ENCODE measurements at regions of chrX and their contacts with region 1.

Region 1: GRCh38 chrX:69222103-69223090 is 57.1 kb upstream of the PJA1 start:
- DNase-seq: peak; percentile 92
- H3K4me3 ChIP-seq: no peak overlapping the region
- H3K27ac ChIP-seq: no peak overlapping the region
- H3K4me1 ChIP-seq: peaks cover 0 to 17% (median 9%) of the 10 kb centered on the region in 4 donors
- H3K27me3 ChIP-seq: no peaks in the 10 kb centered on the region
- CTCF ChIP-seq: peak; percentile 68 to 74 (median 70)
- EP300 ChIP-seq: no peak
- POLR2A ChIP-seq: no peak

Region 2: GRCh38 chrX:68273887-68274286 is 948.5 kb before region 1 on chrX:
- intact Hi-C with region 1: no loop called
- DNase-seq: no peak
- H3K4me3 ChIP-seq: no peak overlapping the region
- H3K27ac ChIP-seq: no peak overlapping the region
- H3K4me1 ChIP-seq: no peaks in the 10 kb centered on the region
- H3K27me3 ChIP-seq: no peaks in the 10 kb centered on the region
- CTCF ChIP-seq: no peak
- EP300 ChIP-seq: no peak
- POLR2A ChIP-seq: no peak

Region 3: DNA sequence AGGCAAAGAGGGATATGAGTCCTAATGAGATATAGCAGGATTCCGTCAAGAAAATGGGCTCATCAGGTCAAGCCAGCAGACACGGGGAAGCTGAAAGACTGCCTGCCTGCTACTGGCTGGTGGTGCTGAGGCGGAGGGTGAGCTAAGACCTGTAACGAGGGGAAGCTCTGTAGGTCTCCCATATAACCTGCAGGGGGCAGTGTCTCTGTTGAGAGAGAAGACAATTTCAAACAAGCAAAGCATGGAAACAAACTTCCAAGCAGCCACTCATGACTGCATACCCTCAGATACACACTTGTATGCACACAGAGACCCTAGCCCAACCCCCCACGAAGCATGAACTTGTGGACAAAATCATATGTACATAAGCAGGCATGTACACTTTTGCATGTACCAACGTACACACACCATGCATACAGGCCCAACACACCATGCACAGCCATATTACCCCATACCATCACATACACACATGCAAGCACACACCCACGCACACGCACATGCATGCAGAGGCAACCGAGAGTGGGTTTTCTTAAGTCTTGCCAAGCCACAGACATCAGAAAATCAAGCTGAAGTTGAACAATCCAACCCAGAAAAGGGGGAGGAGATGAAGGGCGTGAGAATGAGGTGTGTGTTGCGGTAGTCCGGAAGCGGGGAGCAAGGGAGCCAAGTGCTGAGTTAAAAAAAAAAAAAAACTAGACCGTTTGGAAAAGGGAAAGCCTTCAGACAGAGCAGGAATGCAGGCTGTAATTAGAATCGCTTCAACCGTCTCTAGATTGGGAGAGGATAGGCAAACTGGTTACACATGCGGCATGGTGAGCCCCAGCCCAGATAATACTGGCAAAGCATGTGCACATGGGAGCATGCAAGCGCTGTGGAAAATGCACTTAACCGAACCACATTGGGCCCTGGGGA is 128.2 kb before region 1 on chrX:
- intact Hi-C with region 1: loop called (anchors 5 kb)
- DNase-seq: no peak
- H3K4me3 ChIP-seq: no peak overlapping the region
- H3K27ac ChIP-seq: no peak overlapping the region
- H3K4me1 ChIP-seq: no peaks in the 10 kb centered on the region
- H3K27me3 ChIP-seq: no peaks in the 10 kb centered on the region
- CTCF ChIP-seq: peak; percentile 36 to 60 (median 46)
- EP300 ChIP-seq: no peak
- POLR2A ChIP-seq: no peak